ENCODE measurements at regions of chr10 and their contacts with region 1.

Region 1: GRCh38 chr10:60434418-60435046 is 44.9 kb upstream of the ANK3 start:
- DNase-seq: no peak
- H3K4me3 ChIP-seq: no peak overlapping the region
- H3K27ac ChIP-seq: no peak overlapping the region
- H3K4me1 ChIP-seq: peaks cover 7 to 36% (median 31%) of the 10 kb centered on the region in 4 donors
- H3K27me3 ChIP-seq: no peaks in the 10 kb centered on the region
- CTCF ChIP-seq: peak; percentile 64 to 74 (median 73)
- EP300 ChIP-seq: no peak
- POLR2A ChIP-seq: no peak

Region 2: DNA sequence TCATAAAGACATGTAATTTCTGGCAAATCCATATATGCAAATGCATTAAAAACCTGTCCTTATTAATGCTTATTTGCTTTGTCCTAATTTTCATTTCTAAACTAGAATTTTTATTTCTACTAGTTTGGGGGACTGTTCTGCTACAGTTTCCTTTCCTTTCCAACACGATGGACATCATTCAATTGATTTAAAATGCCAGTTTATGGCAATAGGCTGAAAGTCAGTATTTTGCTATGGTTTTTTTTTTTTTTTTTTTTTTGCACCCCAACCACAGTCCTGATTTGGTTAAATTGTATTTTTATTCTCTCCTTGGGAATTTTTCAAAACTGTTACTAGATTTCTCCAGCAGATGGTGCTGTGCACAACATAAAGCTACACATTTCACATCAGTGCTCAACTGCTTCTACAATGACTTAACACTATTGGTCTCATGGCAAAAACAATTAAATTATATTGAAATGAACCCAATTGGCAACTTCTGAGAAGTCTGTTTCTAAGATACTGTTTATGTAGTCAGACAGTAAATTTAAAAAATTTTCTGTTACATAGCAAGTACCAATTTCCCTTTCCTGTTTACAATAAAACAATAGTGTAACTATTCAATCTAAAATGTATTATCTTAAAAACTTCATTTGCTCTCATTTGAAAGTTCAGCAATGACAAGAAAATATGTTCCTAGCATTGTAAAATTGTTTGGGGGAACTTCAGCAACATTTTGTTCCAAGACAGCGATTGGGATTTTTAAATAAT is 334.4 kb before region 1 on chr10:
- intact Hi-C with region 1: loop called (anchors 1 kb)
- DNase-seq: no peak
- H3K4me3 ChIP-seq: no peak overlapping the region
- H3K27ac ChIP-seq: no peak overlapping the region
- H3K4me1 ChIP-seq: peaks cover 0 to 7% (median 5%) of the 10 kb centered on the region in 4 donors
- H3K27me3 ChIP-seq: no peaks in the 10 kb centered on the region
- CTCF ChIP-seq: peak; percentile 56 to 58 (median 58)
- EP300 ChIP-seq: no peak
- POLR2A ChIP-seq: no peak

Region 3: GRCh38 chr10:60208676-60209269 is 225.8 kb before region 1 on chr10:
- intact Hi-C with region 1: loop called (anchors 2 kb)
- DNase-seq: no peak
- H3K4me3 ChIP-seq: no peak overlapping the region
- H3K27ac ChIP-seq: no peak overlapping the region
- H3K4me1 ChIP-seq: no peaks in the 10 kb centered on the region
- H3K27me3 ChIP-seq: no peaks in the 10 kb centered on the region
- CTCF ChIP-seq: peak; percentile 62 to 72 (median 69)
- EP300 ChIP-seq: no peak
- POLR2A ChIP-seq: no peak

Region 4: DNA sequence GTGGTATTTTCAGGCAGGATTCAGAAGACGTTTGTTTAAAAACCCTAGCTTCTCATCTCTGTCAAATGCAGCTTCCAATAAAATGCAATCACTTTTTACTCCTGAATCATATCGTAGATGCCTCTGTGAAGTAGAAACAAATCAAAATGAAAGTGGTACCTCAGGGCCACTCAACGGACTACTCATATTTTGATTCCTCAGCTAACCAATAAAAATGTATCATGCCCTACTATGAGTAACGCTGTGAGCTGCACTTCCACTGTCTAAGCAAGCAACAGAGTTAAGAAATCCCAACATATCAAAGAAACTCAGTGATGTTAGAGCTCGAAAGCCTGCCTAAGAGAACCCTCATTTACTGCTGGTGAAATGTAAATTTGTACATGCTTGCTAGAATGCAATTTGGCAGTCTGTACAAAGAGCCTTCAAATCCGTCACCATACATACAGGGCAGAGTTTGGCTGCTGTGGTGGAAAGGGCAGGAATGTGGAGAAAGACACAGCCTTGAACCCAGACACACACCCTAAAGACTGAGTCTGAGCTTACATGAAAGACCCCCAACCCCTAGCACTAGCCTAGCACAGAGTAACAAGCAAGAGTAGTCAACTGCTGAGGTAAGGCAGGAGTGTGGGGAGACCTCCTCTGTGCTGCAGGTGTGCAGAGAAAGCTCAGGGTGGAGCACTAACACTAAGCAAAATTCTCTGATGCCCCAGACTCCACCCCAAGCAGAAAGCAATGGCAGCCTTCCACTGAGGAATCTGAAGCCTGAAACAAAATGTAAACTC is 196.4 kb before region 1 on chr10:
- intact Hi-C with region 1: loop called (anchors 10 kb)
- DNase-seq: no peak
- H3K4me3 ChIP-seq: peak overlapping the region in 1 of 4 donors; percentile 15
- H3K27ac ChIP-seq: peak overlapping the region in 3 of 4 donors; percentile 2 to 34 (median 16)
- H3K4me1 ChIP-seq: peaks cover 24 to 36% (median 29%) of the 10 kb centered on the region in 4 donors
- H3K27me3 ChIP-seq: no peaks in the 10 kb centered on the region
- CTCF ChIP-seq: peak in 2 of 3 experiments; percentile 27 to 34
- EP300 ChIP-seq: no peak
- POLR2A ChIP-seq: no peak

Region 5: GRCh38 chr10:60490013-60490412 is 55.5 kb after region 1 on chr10:
- intact Hi-C with region 1: no loop called
- DNase-seq: no peak
- H3K4me3 ChIP-seq: no peak overlapping the region
- H3K27ac ChIP-seq: no peak overlapping the region
- H3K4me1 ChIP-seq: no peaks in the 10 kb centered on the region
- H3K27me3 ChIP-seq: no peaks in the 10 kb centered on the region
- CTCF ChIP-seq: no peak
- EP300 ChIP-seq: no peak
- POLR2A ChIP-seq: no peak

Measured in esophagus muscularis mucosa (tissue), 4 donors.